ENCODE measurements at regions of chr12 and their contacts with region 1.

Region 1: DNA sequence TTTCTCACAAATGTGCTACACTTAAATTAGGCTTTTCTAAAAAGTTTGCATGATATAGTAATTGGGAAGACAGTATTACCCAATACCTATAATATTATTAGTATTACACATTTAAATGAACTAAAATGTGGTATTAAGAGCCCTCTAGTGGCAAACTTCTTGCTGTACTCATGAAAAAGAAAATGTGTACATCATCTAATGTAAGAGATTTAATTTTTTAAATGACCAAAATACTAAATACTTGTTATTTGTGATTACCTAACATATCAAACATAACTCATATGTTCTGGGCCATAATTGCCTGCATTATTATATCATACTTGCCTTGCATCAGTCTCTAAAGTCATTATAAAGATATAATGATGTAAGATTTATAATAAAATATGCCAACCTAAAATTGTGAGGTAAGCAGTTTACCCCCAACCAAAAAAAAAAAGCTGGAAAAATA is 64.2 kb downstream of the DNAI7 start:
- DNase-seq: peak; percentile 59
- H3K4me3 Mint-ChIP-seq: no peak overlapping the region
- H3K27ac Mint-ChIP-seq: no peak overlapping the region
- H3K4me1 Mint-ChIP-seq: peaks cover 10% of the 10 kb centered on the region
- H3K27me3 Mint-ChIP-seq: no peaks in the 10 kb centered on the region
- CTCF ChIP-seq: peak; percentile 57

Region 2: GRCh38 chr12:24822121-24822899 is 308.5 kb before region 1 on chr12:
- CTCF ChIA-PET with region 1: no interaction called
- POLR2A ChIA-PET with region 1: no interaction called
- intact Hi-C with region 1: no loop called
- DNase-seq: peak; percentile 15
- H3K4me3 Mint-ChIP-seq: peak overlapping the region; percentile 3
- H3K27ac Mint-ChIP-seq: peak overlapping the region; percentile 24
- H3K4me1 Mint-ChIP-seq: peaks cover 23% of the 10 kb centered on the region
- H3K27me3 Mint-ChIP-seq: no peaks in the 10 kb centered on the region
- CTCF ChIP-seq: no peak

Region 3: DNA sequence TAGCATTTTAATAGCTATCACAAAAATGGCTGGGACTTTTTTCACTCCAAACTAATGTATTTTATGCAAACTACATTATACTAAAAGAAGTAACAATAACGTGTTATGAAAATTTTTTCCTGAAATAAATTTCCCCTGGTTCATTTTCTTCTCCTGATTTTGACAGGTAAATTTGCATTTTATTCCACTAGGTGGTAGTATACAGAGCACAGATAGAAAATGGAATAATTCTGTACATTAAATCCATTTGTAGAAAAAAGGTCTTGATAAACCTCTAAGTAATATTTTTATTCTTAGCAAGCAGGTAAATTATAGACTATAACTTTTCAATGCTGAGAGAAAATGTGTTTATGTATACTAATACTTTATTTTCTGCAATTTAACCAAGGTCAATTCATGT is 278.3 kb before region 1 on chr12:
- CTCF ChIA-PET with region 1: interaction called, 3 read pairs
- POLR2A ChIA-PET with region 1: no interaction called
- intact Hi-C with region 1: loop called (anchors 2 kb)
- DNase-seq: no peak
- H3K4me3 Mint-ChIP-seq: no peak overlapping the region
- H3K27ac Mint-ChIP-seq: no peak overlapping the region
- H3K4me1 Mint-ChIP-seq: peaks cover 18% of the 10 kb centered on the region
- H3K27me3 Mint-ChIP-seq: no peaks in the 10 kb centered on the region
- CTCF ChIP-seq: peak; percentile 42

Region 4: GRCh38 chr12:25119020-25119419 is 11.7 kb before region 1 on chr12:
- CTCF ChIA-PET with region 1: interaction called, 10 read pairs
- POLR2A ChIA-PET with region 1: interaction called, 4 read pairs
- intact Hi-C with region 1: no loop called
- DNase-seq: peak; percentile 4
- H3K4me3 Mint-ChIP-seq: no peak overlapping the region
- H3K27ac Mint-ChIP-seq: no peak overlapping the region
- H3K4me1 Mint-ChIP-seq: peaks cover 12% of the 10 kb centered on the region
- H3K27me3 Mint-ChIP-seq: no peaks in the 10 kb centered on the region
- CTCF ChIP-seq: peak; percentile 13

Region 5: DNA sequence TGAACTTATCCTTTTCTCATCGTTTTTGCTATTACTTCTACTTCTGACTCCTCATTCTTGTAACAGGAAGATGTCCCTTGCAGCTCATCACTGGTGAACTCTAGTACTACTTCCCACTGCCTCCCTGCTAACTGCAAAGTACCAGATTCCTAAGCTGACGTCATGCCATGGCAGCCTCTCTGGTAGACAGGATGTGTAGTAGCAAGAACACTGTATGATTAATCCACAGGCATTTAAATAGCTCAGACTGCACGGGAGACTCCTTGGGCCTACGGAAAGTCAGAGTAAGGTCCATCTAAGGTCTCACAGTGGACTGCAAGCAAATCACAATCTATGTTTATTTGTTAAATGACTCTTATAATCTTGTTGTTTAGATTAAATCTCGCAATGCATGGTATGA is 20.7 kb after region 1 on chr12:
- CTCF ChIA-PET with region 1: interaction called, 33 read pairs
- POLR2A ChIA-PET with region 1: interaction called, 20 read pairs
- intact Hi-C with region 1: no loop called
- DNase-seq: peak; percentile 76
- H3K4me3 Mint-ChIP-seq: no peak overlapping the region
- H3K27ac Mint-ChIP-seq: no peak overlapping the region
- H3K4me1 Mint-ChIP-seq: peaks cover 10% of the 10 kb centered on the region
- H3K27me3 Mint-ChIP-seq: no peaks in the 10 kb centered on the region
- CTCF ChIP-seq: no peak

Measured in MCF 10A (cell line).